B cell (primary cell): ENCODE measurements at regions of chr2 and their contacts with region 1.

Region 1: GRCh38 chr2:85642725-85643124 is 25.3 kb downstream of the SFTPB start:
- DNase-seq: no peak
- ATAC-seq: no peak
- H3K4me3 ChIP-seq: no peak overlapping the region
- H3K4me3 Mint-ChIP-seq: no peak overlapping the region
- H3K27ac ChIP-seq: no peak overlapping the region
- H3K27ac Mint-ChIP-seq: no peak overlapping the region
- H3K4me1 ChIP-seq: peaks cover 6 to 9% of the 10 kb centered on the region in 2 donors
- H3K4me1 Mint-ChIP-seq: peaks cover 5% of the 10 kb centered on the region
- H3K27me3 ChIP-seq: no peaks in the 10 kb centered on the region
- H3K27me3 Mint-ChIP-seq: no peaks in the 10 kb centered on the region
- CTCF ChIP-seq: no peak

Region 2: DNA sequence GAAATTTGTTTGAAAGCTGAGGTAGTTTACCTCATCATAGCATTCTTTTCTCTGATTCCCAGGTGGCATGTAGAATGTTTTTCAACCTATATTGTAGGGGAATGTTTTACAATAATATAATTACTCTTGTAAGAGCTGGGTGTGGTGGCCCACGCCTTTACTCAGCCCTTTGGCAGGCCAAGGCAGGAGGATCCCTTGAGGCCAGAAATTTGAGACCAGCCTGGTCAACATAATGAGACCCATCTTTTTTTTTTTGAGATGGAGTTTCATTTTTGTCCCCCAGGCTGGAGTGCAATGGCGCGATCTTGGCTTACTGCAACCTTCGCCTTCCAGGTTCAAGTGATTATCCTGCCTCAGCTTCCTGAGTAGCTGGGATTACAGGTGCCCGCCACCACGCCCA is 23.1 kb before region 1 on chr2:
- CTCF ChIA-PET with region 1: interaction called, 23 read pairs
- POLR2A ChIA-PET with region 1: interaction called, 4 read pairs
- intact Hi-C with region 1: loop called (anchors 2 kb)
- DNase-seq: no peak
- ATAC-seq: no peak
- H3K4me3 ChIP-seq: no peak overlapping the region
- H3K4me3 Mint-ChIP-seq: no peak overlapping the region
- H3K27ac ChIP-seq: no peak overlapping the region
- H3K27ac Mint-ChIP-seq: no peak overlapping the region
- H3K4me1 ChIP-seq: peaks cover 15 to 23% of the 10 kb centered on the region in 2 donors
- H3K4me1 Mint-ChIP-seq: peaks cover 21% of the 10 kb centered on the region
- H3K27me3 ChIP-seq: no peaks in the 10 kb centered on the region
- H3K27me3 Mint-ChIP-seq: no peaks in the 10 kb centered on the region
- CTCF ChIP-seq: no peak

Region 3: GRCh38 chr2:85628658-85629057 is 14.1 kb before region 1 on chr2:
- CTCF ChIA-PET with region 1: interaction called, 23 read pairs
- POLR2A ChIA-PET with region 1: no interaction called
- intact Hi-C with region 1: no loop called
- DNase-seq: peak; percentile 32
- ATAC-seq: peak; percentile 67
- H3K4me3 ChIP-seq: no peak overlapping the region
- H3K4me3 Mint-ChIP-seq: no peak overlapping the region
- H3K27ac ChIP-seq: peak overlapping the region in 1 of 2 donors; percentile 67
- H3K27ac Mint-ChIP-seq: peak overlapping the region; percentile 66
- H3K4me1 ChIP-seq: peaks cover 7% of the 10 kb centered on the region in 2 donors
- H3K4me1 Mint-ChIP-seq: peaks cover 10% of the 10 kb centered on the region
- H3K27me3 ChIP-seq: no peaks in the 10 kb centered on the region
- H3K27me3 Mint-ChIP-seq: no peaks in the 10 kb centered on the region
- CTCF ChIP-seq: no peak

Region 4: GRCh38 chr2:85662899-85663593 is 20.3 kb after region 1 on chr2:
- CTCF ChIA-PET with region 1: interaction called, 10 read pairs
- POLR2A ChIA-PET with region 1: no interaction called
- intact Hi-C with region 1: no loop called
- DNase-seq: no peak
- ATAC-seq: no peak
- H3K4me3 ChIP-seq: no peak overlapping the region
- H3K4me3 Mint-ChIP-seq: no peak overlapping the region
- H3K27ac ChIP-seq: no peak overlapping the region
- H3K27ac Mint-ChIP-seq: no peak overlapping the region
- H3K4me1 ChIP-seq: no peaks in the 10 kb centered on the region
- H3K4me1 Mint-ChIP-seq: no peaks in the 10 kb centered on the region
- H3K27me3 ChIP-seq: peaks cover 0 to 2% (median 0%) of the 10 kb centered on the region in 4 experiments
- H3K27me3 Mint-ChIP-seq: no peaks in the 10 kb centered on the region
- CTCF ChIP-seq: no peak